IMR-90 (cell line): ENCODE measurements at regions of chr9 and their contacts with region 1.

Region 1: DNA sequence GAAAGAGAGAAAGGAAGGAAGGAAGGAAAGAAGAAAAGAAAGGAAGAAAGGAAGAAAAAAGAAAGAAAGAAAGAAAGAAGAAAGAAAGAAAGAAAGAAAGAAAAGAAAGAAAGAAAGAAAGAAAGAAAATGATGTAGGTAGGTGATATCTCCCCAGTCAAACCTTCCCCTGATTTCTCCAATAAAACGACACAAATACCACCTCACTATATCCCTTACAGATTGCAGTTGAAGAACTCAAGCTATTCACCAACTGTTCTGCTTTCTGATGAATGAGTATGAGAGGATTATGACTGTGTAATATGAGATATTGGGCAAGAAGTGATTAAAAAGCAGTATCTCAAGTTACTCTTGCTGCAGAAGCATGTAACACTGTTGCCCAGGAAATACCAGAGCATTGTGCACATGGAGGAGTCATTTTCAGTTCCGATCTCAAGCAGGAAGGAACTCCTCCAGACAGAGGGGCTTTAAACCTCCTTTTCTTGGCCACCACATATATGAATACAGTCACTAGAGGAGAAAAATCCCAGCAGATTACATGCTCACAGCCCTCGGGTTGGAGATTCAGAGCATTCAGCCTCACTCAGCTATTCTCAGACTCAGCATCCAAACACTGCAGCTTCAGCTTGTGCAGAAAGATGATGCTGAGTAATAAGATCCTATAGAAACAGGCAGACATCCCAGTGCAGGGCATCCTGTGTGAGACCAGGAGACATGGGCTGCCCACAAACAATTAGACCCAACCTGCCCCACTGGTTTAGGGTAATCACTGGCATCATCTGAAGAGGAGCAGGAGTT is 61.4 kb downstream of the UGCG start:
- DNase-seq: peak; percentile 99
- ATAC-seq: peak; percentile 86
- H3K4me3 ChIP-seq: peak overlapping the region; percentile 42
- H3K27ac ChIP-seq: peak overlapping the region; percentile 96
- H3K4me1 ChIP-seq: peaks cover 23% of the 10 kb centered on the region
- H3K27me3 ChIP-seq: no peaks in the 10 kb centered on the region
- CTCF ChIP-seq: no peak
- POLR2A ChIP-seq: peak; percentile 79
- RAD21 ChIP-seq: peak; percentile 26; the same call in 1 of the 2 replicates

Region 2: GRCh38 chr9:112029921-112030444 is 71.9 kb after region 1 on chr9:
- CTCF ChIA-PET with region 1: no interaction called
- POLR2A ChIA-PET with region 1: no interaction called
- dilution Hi-C with region 1: no loop called
- in situ Hi-C with region 1: no loop called
- intact Hi-C with region 1: loop called (anchors 5 kb)
- DNase-seq: peak; percentile 84
- ATAC-seq: peak; percentile 77
- H3K4me3 ChIP-seq: no peak overlapping the region
- H3K27ac ChIP-seq: peak overlapping the region; percentile 43; the same call in 1 of the 2 replicates
- H3K4me1 ChIP-seq: peaks cover 26% of the 10 kb centered on the region
- H3K27me3 ChIP-seq: no peaks in the 10 kb centered on the region
- CTCF ChIP-seq: no peak
- POLR2A ChIP-seq: no peak
- RAD21 ChIP-seq: 0 out of 2 replicates have a peak, but pooled peaks have one; percentile 9

Region 3: DNA sequence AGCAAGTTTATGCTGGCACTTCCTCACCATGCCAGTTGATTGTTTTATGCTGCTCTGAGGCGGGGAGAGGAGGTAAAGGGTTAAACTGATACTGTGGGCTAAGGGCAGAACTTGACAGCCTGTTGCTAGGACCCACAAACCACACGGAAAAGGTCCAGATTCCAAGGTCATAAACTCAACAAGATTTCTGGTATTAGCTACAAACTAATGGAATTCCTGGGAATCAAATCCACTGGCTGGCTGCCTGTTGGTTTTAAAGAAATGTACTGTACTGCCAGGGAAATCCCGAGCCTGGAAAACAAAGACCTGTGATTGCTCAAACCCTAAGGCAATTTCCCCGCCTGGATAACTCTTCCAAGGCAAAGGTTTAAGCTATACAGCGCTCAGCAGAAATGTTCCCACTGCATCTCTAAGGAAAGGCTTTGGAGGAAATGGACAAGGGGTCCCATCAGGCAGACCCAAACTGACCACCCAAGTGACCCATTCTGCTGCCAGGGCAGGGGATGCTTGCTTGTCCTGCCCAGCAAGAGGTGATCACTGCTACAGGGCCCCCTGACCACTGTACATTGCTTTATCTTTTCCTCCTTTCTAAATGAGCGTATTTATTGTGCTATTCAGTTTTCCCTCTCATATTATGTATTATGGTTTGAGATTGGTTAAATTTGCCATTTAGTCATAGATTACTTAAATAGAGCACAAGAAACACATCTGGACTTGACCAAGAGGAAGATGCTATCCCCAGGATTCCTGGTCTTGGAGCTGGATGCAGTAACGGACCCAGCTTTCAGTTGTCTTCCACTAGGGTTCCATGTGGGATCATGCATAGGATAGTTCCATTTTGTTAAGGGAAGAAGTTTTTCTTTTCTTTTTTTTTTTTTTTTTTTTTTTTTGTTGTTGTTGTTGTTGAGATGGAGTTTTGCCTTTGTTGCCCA is 92.8 kb after region 1 on chr9:
- CTCF ChIA-PET with region 1: no interaction called
- POLR2A ChIA-PET with region 1: no interaction called
- dilution Hi-C with region 1: no loop called
- in situ Hi-C with region 1: loop called (anchors 5 kb)
- intact Hi-C with region 1: no loop called
- DNase-seq: peak; percentile 97
- ATAC-seq: peak; percentile 81
- H3K4me3 ChIP-seq: no peak overlapping the region
- H3K27ac ChIP-seq: peak overlapping the region; percentile 96
- H3K4me1 ChIP-seq: peaks cover 22% of the 10 kb centered on the region
- H3K27me3 ChIP-seq: no peaks in the 10 kb centered on the region
- CTCF ChIP-seq: no peak
- POLR2A ChIP-seq: 0 out of 2 replicates have a peak, but pooled peaks have one; percentile 9
- RAD21 ChIP-seq: no peak; the same call in 1 of the 2 replicates